ENCODE measurements at regions of chr17 and their contacts with region 1.

Region 1: DNA sequence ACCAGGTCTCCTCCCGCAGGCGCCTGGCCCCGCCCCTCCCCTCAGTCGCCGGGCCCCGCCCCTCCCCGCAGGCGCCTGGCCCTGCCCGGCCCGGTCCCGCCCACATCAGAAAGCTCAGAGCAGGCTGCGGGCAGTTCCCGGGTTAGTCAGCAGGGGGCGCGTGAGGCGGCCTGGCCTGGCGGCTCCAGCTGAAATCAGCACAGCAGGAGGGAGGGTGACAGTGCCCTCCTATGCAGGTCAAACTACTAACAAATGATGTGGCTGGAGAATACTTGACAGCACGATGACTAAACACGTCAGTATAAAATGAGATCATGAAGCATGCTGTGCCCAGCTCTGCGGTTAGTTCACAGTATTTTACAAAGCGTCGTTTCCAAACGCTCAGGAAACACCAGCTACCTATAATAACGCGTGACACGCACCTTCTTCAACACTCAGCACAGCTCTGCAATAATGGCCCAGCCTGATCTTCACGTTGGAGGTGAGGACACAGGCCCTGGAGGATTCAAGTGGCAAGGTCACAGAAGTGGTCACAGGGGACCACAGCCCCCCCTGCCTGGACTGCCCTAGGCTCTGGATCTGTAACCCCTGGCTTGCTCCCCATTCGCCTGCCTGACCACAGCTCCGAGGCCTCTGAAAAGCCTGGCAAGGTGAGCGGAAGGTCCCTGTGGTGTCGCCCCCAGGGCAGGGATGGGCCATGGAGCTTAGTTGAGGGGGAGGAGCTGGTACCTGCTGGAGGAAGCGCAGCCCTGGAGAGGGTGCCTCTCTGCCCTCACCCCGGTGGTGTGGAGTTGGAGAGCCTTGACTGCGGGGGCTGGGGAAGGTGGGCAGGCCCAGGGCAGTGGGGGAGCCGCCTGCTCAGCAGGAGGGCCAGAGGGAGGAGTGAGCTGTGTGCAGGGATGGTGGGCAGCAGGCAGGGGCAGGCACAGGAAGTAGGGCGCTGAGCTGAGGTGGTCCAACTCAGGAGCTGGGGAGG is 81.2 kb downstream of the KCNJ12 start:
- DNase-seq: peak; percentile 80 to 98
- H3K4me3 ChIP-seq: no peak overlapping the region
- CTCF ChIP-seq: no peak
- POLR2A ChIP-seq: no peak

Region 2: DNA sequence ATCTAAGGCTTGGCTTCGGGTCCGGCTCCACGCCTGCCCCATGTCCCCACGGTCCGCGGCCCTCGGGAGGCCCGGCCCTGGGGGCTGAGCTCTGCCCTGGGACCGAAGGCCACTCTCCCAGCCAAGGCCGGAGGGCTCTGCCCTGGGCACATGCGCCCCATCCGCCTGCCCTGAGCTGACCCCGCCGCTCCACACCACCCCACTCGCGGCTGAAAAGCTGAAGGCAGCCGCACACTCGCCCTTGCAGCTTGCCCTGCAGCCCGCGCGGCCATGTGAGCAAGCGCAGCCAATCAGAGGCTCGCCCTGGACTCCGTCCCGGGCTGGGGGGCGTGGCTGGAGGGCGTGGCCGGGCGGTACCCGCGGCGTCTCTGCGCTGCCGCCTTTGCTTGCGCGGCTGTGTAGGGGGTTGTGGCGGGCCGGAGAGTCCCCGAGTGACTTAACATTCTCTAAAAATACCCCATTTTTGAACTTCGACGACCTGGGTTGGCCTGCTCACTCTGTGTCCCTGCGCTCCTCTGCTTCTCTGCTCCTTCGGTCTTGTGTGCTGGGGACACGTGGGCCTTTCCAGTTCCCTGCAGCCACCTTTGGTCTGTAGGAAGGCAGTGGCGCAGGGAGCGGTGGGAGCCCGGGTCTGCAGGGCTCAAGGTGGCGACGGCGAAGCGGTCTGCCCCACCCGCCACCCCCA is 181.6 kb before region 1 on chr17:
- intact Hi-C with region 1: no loop called
- DNase-seq: peak; percentile 91 to 99
- H3K4me3 ChIP-seq: peak overlapping the region; percentile 31
- CTCF ChIP-seq: no peak
- POLR2A ChIP-seq: no peak

Region 3: GRCh38 chr17:21511363-21512198 is 54.2 kb after region 1 on chr17:
- intact Hi-C with region 1: loop called (anchors 5 kb)
- DNase-seq: peak; percentile 74 to 96
- H3K4me3 ChIP-seq: peak overlapping the region; percentile 35
- CTCF ChIP-seq: peak in 1 of 3 donors; percentile 48
- POLR2A ChIP-seq: no peak